ENCODE measurements at regions of chr13 and their contacts with region 1.

Region 1: GRCh38 chr13:27424246-27425157 is at the start of gene GTF3A:
- DNase-seq: peak; percentile 81
- H3K4me3 ChIP-seq: peak within 1 kb of the TSS; percentile 65
- H3K27ac ChIP-seq: peak within 1 kb of the TSS; percentile 90
- H3K4me1 ChIP-seq: peaks cover 3% of the 10 kb centered on the region
- H3K27me3 ChIP-seq: no peaks in the 10 kb centered on the region
- CTCF ChIP-seq: no peak
- total RNA-seq, gene GTF3A: 39.7 to 76.0 TPM

Region 2: GRCh38 chr13:27236478-27236877 is 188.0 kb before region 1 on chr13:
- intact Hi-C with region 1: no loop called
- DNase-seq: no peak
- H3K4me3 ChIP-seq: no peak overlapping the region
- H3K27ac ChIP-seq: no peak overlapping the region
- H3K4me1 ChIP-seq: no peaks in the 10 kb centered on the region
- H3K27me3 ChIP-seq: no peaks in the 10 kb centered on the region
- CTCF ChIP-seq: no peak

Region 3: DNA sequence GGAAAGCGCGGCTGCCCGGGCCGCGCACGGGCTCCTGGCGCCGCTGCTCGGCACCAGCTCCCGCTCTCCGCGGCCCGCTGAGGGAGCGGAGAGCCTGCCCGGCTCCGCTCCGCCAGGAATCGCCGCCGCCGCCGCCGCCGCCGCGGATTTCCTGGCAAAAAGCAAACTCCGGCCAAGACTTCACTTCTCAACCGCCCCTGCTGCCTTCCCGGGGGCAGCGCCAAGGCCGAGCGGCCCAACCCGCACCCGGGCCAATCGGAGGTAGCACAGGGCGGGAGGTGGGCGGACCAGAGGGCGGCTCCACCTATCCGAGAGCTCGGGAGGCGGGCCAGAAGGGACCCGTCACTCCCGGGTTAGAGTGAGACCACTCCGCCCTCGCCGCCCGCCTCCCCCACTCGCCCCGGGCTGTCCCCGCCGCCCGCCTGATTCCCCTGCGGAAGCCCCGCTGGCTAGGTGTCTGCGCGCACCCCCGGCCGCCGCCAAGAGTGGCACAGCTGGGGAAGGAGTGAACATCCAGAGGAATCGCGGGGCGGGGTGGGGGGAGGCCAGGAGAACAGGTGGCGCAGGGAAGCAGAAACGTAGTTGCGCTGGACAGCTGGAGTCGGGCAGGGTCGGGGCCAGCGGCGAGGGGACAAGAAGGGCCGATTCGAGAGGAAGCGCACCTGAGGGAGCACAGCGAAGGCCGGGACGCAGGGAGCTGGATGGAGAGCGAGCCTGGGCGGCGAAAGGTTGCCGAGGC is 196.0 kb after region 1 on chr13 and contains the start of gene LNX2:
- intact Hi-C with region 1: loop called (anchors 10 kb)
- DNase-seq: peak; percentile 98
- H3K4me3 ChIP-seq: peak within 1 kb of the TSS; percentile 65
- H3K27ac ChIP-seq: peak within 1 kb of the TSS; percentile 96
- H3K4me1 ChIP-seq: peaks cover 13% of the 10 kb centered on the region
- H3K27me3 ChIP-seq: no peaks in the 10 kb centered on the region
- CTCF ChIP-seq: no peak
- total RNA-seq, gene LNX2: 22.4 to 30.3 TPM

Measured in colonic mucosa (tissue), 4 donors.